PC-3 (cell line): ENCODE measurements at regions of chr3 and their contacts with region 1.

Region 1: GRCh38 chr3:48765376-48765775 is 48.4 kb upstream of the IP6K2 start:
- DNase-seq: peak; percentile 49
- ATAC-seq: peak; percentile 97
- H3K4me3 ChIP-seq: no peak overlapping the region
- H3K27ac ChIP-seq: no peak overlapping the region
- H3K4me1 ChIP-seq: no peaks in the 10 kb centered on the region
- H3K27me3 ChIP-seq: no peaks in the 10 kb centered on the region
- CTCF ChIP-seq: peak; percentile 64

Region 2: GRCh38 chr3:48739955-48740823 is 25.2 kb before region 1 on chr3:
- CTCF ChIA-PET with region 1: interaction called, 11 read pairs
- POLR2A ChIA-PET with region 1: no interaction called
- intact Hi-C with region 1: no loop called
- DNase-seq: peak; percentile 86
- ATAC-seq: peak; percentile 96
- H3K4me3 ChIP-seq: peak overlapping the region; percentile 31; the same call in 1 of the 2 replicates
- H3K27ac ChIP-seq: peak overlapping the region; percentile 47
- H3K4me1 ChIP-seq: peaks cover 12% of the 10 kb centered on the region
- H3K27me3 ChIP-seq: no peaks in the 10 kb centered on the region
- CTCF ChIP-seq: peak; percentile 91

Region 3: GRCh38 chr3:48747015-48747615 is 18.3 kb before region 1 on chr3:
- CTCF ChIA-PET with region 1: interaction called, 11 read pairs
- POLR2A ChIA-PET with region 1: no interaction called
- intact Hi-C with region 1: loop called (anchors 2 kb)
- DNase-seq: no peak
- ATAC-seq: peak; percentile 75
- H3K4me3 ChIP-seq: no peak overlapping the region
- H3K27ac ChIP-seq: no peak overlapping the region
- H3K4me1 ChIP-seq: no peaks in the 10 kb centered on the region
- H3K27me3 ChIP-seq: no peaks in the 10 kb centered on the region
- CTCF ChIP-seq: no peak

Region 4: GRCh38 chr3:48847504-48848423 is 82.4 kb after region 1 on chr3 and contains the start of gene PRKAR2A:
- CTCF ChIA-PET with region 1: no interaction called
- POLR2A ChIA-PET with region 1: interaction called, 21 read pairs
- intact Hi-C with region 1: no loop called
- DNase-seq: peak; percentile 93
- ATAC-seq: peak; percentile 87
- H3K4me3 ChIP-seq: peak within 1 kb of the TSS; percentile 76
- H3K27ac ChIP-seq: peak within 1 kb of the TSS; percentile 69
- H3K4me1 ChIP-seq: peaks cover 7% of the 10 kb centered on the region
- H3K27me3 ChIP-seq: no peaks in the 10 kb centered on the region
- CTCF ChIP-seq: no peak
- total RNA-seq, gene PRKAR2A: 68.1 and 117 TPM in 2 replicates